Posterior cingulate gyrus (tissue), 11 donors: ENCODE measurements at regions of chr2 and their contacts with region 1.

Region 1: DNA sequence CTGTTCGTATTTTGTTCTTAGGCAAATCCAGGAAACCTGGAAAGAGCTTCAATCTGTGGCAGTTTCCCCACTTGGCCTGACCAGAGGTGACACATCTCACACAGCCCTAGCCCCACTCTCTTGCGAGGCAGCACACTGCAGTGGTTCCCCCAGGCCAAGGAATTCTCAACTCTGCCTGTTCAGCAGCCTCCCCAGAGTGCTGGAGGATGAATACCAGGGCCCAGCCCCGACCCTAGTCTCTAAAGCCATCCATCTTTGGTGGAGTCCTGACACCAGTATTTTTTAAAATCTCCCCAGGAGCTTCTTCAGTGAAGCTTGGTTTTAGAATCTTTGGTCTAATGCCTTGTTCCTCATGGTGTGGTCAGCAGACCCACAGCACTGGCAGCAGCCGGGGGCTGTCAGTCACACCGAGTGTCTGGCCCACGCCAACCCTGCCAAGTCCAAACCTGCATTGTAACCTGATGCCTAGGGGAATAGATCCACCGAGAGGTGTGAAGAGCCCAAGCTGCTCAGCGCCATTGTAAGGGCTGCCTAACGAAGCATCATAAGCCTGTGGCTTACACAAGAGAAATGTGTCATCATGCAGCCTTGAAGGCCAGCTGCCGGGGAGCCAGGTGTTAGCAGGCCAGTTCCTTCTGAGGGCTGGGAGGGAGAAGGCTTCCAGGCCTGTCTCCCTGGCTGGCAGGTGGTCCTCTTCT is 428.7 kb upstream of the ID2 start:
- DNase-seq: no peak

Region 2: GRCh38 chr2:8300216-8300615 is 47.1 kb after region 1 on chr2:
- intact Hi-C with region 1: no loop called
- DNase-seq: no peak

Region 3: GRCh38 chr2:8312861-8313830 is 60.0 kb after region 1 on chr2:
- intact Hi-C with region 1: no loop called
- DNase-seq: no peak

Region 4: GRCh38 chr2:8525582-8526402 is 272.6 kb after region 1 on chr2:
- intact Hi-C with region 1: no loop called
- DNase-seq: peak in 9 of 10 donors; percentile 44 to 94 (median 53)

Region 5: DNA sequence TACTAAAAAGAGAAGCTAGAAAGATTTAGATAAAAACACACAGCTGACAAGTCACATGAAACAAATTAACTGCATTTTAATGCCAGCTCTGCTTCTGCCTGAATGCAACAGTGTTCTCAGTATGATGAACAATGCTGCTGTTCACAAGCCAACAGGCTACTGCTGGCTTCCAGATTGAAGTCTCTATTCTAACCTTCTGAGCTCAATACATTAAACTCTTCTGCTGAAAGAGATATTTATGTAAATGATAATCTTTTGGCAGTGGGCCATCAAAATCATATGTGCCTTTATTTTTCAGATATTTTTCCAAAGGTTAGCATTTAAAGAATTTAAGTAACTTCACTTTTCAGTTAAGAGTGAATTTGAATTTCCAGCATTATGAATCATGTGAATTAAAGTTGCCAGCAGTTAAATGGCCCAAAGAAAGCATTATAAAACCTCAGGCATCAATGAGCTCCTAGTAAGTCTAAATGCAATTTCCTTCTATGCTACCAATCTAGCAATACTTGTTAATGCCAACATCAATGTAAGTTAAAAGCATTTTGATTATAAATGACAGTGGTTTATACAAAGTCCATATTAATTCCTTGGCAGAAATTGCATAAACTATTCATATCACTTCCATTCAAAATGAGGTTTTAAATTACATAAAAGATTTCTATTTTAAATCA is 501.1 kb after region 1 on chr2:
- intact Hi-C with region 1: loop called (anchors 10 kb)
- DNase-seq: peak in 5 of 10 donors; percentile 23 to 83 (median 46)